IMR-90 (cell line): ENCODE measurements at regions of chr14 and their contacts with region 1.

Region 1: DNA sequence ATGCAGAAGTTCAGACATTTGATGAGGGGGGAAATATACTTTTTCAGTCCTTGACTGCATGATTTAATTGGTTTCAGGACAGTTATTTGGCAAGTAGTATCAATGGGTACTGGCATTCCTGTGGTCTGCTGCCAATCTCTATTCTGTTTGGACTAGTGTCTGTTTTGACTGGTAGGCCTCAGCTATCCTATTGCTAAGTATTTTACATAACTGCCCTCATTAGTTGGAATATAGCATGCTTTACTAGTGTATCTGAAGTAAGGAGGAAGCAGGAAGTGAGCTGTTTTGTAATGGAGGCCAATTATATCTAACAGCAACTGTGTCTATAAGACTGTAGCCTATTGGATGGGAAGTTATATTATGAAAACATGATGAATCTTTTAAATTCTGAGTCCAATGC is 104.3 kb downstream of the FLRT2 start:
- DNase-seq: no peak
- ATAC-seq: peak; percentile 27; the same call in 1 of the 2 replicates
- H3K4me3 ChIP-seq: no peak overlapping the region
- H3K27ac ChIP-seq: no peak overlapping the region
- H3K4me1 ChIP-seq: no peaks in the 10 kb centered on the region
- H3K27me3 ChIP-seq: no peaks in the 10 kb centered on the region
- CTCF ChIP-seq: no peak
- POLR2A ChIP-seq: no peak
- RAD21 ChIP-seq: no peak

Region 2: DNA sequence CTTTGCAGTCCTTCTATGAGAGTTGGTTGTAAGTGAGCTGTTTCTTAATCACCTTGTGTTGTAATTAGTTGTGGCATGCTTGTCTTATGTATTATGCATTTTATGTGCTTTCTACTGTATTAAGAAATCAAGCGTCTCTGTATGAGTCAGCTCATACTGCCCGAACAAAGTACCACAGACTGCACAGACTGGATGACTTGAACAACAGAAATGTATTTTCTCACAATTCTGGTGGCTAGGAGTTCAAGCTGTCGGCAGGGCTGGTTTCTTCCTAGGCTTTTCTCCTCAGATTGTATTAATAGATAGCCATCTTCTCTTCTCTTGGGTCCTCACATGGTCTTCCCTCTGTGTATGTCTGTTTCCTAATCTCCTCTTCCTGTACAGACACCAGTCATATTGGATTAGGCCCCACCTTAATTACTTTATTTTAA is 26.5 kb before region 1 on chr14:
- CTCF ChIA-PET with region 1: interaction called, 17 read pairs
- POLR2A ChIA-PET with region 1: no interaction called
- dilution Hi-C with region 1: no loop called
- in situ Hi-C with region 1: no loop called
- intact Hi-C with region 1: no loop called
- DNase-seq: peak; percentile 97
- ATAC-seq: peak; percentile 95
- H3K4me3 ChIP-seq: no peak overlapping the region
- H3K27ac ChIP-seq: peak overlapping the region; percentile 15; the same call in 1 of the 2 replicates
- H3K4me1 ChIP-seq: peaks cover 11% of the 10 kb centered on the region
- H3K27me3 ChIP-seq: no peaks in the 10 kb centered on the region
- CTCF ChIP-seq: no peak
- POLR2A ChIP-seq: no peak
- RAD21 ChIP-seq: 0 out of 2 replicates have a peak, but pooled peaks have one; percentile 10